Heart right ventricle (tissue), 16 donors: ENCODE measurements at regions of chr6 and their contacts with region 1.

Region 1: GRCh38 chr6:154494592-154495311 is 15.7 kb downstream of the CNKSR3 start:
- DNase-seq: no peak
- ATAC-seq: peak in 3 of 8 donors; percentile 24 to 60 (median 28)
- H3K4me3 ChIP-seq: no peak overlapping the region
- H3K27ac ChIP-seq: no peak overlapping the region
- H3K4me1 ChIP-seq: peaks cover 0 to 71% (median 22%) of the 10 kb centered on the region in 9 donors
- H3K27me3 ChIP-seq: no peaks in the 10 kb centered on the region
- CTCF ChIP-seq: no peak

Region 2: GRCh38 chr6:153862927-153863326 is 631.8 kb before region 1 on chr6:
- intact Hi-C with region 1: no loop called
- DNase-seq: no peak
- ATAC-seq: no peak
- H3K4me3 ChIP-seq: no peak overlapping the region
- H3K27ac ChIP-seq: no peak overlapping the region
- H3K4me1 ChIP-seq: no peaks in the 10 kb centered on the region
- H3K27me3 ChIP-seq: no peaks in the 10 kb centered on the region
- CTCF ChIP-seq: no peak

Region 3: GRCh38 chr6:154258064-154258757 is 236.5 kb before region 1 on chr6:
- intact Hi-C with region 1: no loop called
- DNase-seq: no peak
- ATAC-seq: peak in 3 of 8 donors; percentile 34 to 47 (median 46)
- H3K4me3 ChIP-seq: no peak overlapping the region
- H3K27ac ChIP-seq: peak overlapping the region in 1 of 10 donors; percentile 16
- H3K4me1 ChIP-seq: peaks cover 0 to 27% (median 0%) of the 10 kb centered on the region in 9 donors
- H3K27me3 ChIP-seq: no peaks in the 10 kb centered on the region
- CTCF ChIP-seq: no peak

Region 4: GRCh38 chr6:154432533-154433476 is 61.9 kb before region 1 on chr6:
- intact Hi-C with region 1: loop called in 1 of 10 experiments (anchors 5 kb)
- DNase-seq: peak in 1 of 2 donors; percentile 34
- ATAC-seq: peak; percentile 31 to 83 (median 79)
- H3K4me3 ChIP-seq: no peak overlapping the region
- H3K27ac ChIP-seq: peak overlapping the region in 7 of 10 donors; percentile 8 to 68 (median 33)
- H3K4me1 ChIP-seq: peaks cover 8 to 58% (median 35%) of the 10 kb centered on the region in 9 donors
- H3K27me3 ChIP-seq: no peaks in the 10 kb centered on the region
- CTCF ChIP-seq: no peak